HCT116 (cell line): ENCODE measurements at regions of chr19 and their contacts with region 1.

Region 1: DNA sequence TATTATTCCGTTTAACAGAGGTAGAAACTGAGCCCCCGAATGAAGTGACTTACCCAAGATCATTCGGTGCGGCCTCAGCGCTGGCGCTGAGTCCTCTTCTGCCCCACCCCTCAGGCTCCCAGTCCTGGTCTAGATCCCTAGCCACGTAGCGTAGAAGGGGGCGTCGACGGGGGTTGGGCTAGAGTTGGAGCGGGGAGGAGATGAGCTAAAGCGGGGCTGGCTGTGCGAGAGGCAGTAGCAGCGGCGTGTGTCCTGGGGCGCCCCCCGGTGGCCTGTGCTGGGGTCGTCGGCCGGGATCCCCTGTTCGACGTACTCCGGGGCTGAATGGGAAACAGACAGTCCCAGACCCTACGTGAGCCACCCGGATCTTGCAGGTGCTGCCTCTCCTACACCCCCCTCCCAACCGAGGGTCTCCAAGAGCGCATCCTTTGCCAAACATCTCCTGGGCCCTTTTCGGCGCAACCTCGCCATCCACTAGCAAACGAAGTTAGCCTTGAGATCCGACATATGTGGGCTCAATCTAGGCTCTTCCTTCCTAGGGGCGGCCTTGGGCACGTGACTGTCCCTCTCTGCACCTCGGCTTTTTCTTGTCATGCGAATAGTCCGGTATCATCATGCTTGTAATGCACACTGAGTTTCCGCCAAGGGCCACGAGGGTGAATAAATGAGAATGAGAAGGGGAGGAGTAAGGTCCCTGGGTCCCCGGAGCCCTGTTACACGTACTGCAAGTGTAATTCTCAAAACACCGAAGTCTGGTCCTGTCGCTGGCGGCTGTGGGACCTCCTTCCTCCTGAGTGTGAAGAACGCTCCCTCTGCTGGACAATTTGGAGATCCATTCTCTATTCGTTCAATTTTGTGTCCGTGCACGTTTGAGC is 47.7 kb downstream of the CYP4F22 start:
- DNase-seq: peak; percentile 93
- ATAC-seq: peak; percentile 91
- H3K4me3 ChIP-seq: peak overlapping the region; percentile 40 to 53
- H3K27ac ChIP-seq: peak overlapping the region; percentile 25
- H3K4me1 ChIP-seq: peaks cover 5 to 28% of the 10 kb centered on the region in 2 experiments; a peak in 3 of 4 replicates
- H3K27me3 ChIP-seq: no peaks in the 10 kb centered on the region
- CTCF ChIP-seq: peak; percentile 77 to 91 (median 90)
- POLR2A ChIP-seq: no peak
- RAD21 ChIP-seq: peak; percentile 95

Region 2: DNA sequence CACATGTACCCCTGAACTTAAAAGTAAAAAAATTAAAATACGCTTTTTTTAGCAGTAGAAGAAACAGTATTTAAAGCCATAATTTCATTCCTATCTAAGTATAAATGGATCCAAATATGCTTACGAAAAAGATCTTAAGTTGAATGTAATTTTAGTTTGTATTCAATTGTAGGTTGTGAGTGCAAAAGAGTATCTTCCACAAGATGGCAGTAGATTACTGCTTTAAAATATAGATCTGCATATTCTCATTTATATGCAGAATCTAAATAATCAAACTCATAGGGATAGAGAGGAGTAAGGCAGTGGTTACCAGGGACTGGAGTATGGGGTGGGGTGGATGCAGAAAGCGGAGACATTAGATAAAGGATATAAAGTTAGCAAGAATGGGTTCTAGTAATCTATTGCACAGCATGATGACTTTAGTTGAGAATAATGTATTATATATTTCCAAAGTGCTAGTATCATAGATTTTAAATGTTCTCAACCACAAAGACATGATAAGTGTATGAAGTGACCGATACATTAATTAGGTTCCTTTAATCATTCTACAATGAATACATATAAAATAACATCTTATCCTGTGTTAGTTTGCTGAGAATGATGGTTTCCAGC is 684.3 kb before region 1 on chr19:
- CTCF ChIA-PET with region 1: no interaction called
- POLR2A ChIA-PET with region 1: no interaction called
- RAD21 ChIA-PET with region 1: no interaction called
- intact Hi-C with region 1: loop called (anchors 2 kb)
- DNase-seq: peak; percentile 22
- ATAC-seq: peak; percentile 62
- H3K4me3 ChIP-seq: no peak overlapping the region
- H3K27ac ChIP-seq: no peak overlapping the region
- H3K4me1 ChIP-seq: no peaks in the 10 kb centered on the region
- H3K27me3 ChIP-seq: peaks cover 45% of the 10 kb centered on the region
- CTCF ChIP-seq: peak; percentile 46 to 80 (median 59); a peak in 5 of 6 replicates
- POLR2A ChIP-seq: no peak
- RAD21 ChIP-seq: peak; percentile 73

Region 3: DNA sequence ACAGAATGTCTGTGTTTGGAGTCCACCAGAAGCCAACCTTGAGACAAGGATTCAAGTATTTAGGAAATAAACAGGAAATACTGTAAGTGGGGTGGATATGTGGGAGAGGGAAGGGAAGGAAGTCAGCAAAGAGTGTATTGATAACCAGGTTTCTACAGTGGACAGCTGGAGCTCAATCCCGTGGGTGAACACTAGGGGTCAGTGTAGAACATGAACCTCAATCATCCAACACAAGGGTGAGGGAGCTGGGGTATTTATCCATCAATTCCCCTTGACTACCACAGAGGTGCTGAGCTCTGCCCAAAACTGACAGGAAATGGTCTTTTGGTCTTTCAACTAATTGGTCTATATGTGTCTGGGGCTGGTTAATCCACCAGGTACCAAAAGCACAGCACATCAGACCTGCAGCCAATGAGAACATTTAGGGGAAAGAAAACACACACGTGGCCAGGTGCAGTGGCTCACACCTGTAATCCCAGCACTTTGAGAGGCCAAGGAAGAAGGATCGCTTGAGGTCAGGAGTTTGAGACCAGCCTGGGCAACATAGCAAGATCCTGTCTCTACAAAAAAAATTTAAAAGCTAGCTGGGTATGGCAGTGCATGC is 454.4 kb before region 1 on chr19:
- CTCF ChIA-PET with region 1: interaction called, 15 read pairs
- POLR2A ChIA-PET with region 1: no interaction called
- RAD21 ChIA-PET with region 1: no interaction called
- intact Hi-C with region 1: no loop called
- DNase-seq: peak; percentile 38
- ATAC-seq: peak; percentile 82
- H3K4me3 ChIP-seq: no peak overlapping the region
- H3K27ac ChIP-seq: no peak overlapping the region
- H3K4me1 ChIP-seq: peaks cover 5% of the 10 kb centered on the region in 2 experiments; a peak in 3 of 4 replicates
- H3K27me3 ChIP-seq: no peaks in the 10 kb centered on the region
- CTCF ChIP-seq: peak; percentile 56 to 83 (median 80)
- POLR2A ChIP-seq: no peak
- RAD21 ChIP-seq: peak; percentile 68

Region 4: GRCh38 chr19:15177269-15178116 is 378.5 kb before region 1 on chr19:
- CTCF ChIA-PET with region 1: interaction called, 6 read pairs
- POLR2A ChIA-PET with region 1: no interaction called
- RAD21 ChIA-PET with region 1: no interaction called
- intact Hi-C with region 1: loop called (anchors 1 kb)
- DNase-seq: no peak
- ATAC-seq: peak; percentile 89
- H3K4me3 ChIP-seq: no peak overlapping the region
- H3K27ac ChIP-seq: no peak overlapping the region
- H3K4me1 ChIP-seq: peaks cover 0 to 3% of the 10 kb centered on the region in 2 experiments; a peak in 1 of 4 replicates
- H3K27me3 ChIP-seq: no peaks in the 10 kb centered on the region
- CTCF ChIP-seq: peak; percentile 64 to 78 (median 75)
- POLR2A ChIP-seq: no peak
- RAD21 ChIP-seq: peak; percentile 88

Region 5: DNA sequence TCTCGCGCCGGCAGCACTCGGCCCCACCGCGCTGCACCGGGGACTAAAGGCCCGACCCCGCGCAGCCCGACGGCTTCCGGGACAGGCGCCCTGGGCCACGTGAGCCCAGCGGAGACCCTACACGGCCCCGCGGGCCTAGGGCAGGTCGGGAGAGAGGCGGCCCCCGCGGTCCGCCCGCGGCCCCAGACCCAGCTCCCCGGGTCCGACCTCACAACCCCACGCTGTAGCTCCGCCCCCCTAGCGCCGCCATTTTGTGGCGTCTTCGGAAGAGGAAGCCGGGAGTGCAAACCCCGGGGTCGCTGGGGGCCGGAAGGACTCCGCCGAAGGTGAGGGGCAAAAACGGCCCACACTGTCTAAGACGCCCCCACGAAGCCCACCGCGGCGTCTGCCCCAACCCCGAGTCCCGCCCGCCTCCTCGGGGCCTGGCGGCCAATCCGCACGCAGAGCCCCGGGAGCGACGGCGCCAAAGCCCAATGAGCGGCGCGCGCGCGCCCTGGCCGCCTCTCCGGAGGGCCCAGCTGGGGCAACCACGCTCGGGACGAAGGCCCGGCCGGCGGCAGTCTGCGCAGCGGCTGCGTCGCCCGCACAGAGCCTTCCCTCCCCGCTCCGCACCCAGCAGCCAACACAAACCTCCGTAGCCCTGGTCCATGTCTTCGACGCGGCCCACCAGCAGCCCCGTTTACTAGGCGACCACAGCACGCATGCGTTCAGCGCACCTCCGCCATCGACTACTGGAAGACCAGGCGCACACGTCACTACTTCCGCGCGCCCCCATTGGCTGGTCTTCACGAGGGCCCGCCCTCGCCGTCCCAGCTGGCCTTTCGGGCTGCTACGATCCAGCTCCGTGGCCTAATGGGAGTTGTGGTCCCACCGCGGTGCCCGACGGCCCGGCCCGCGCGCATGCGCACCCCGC is 176.7 kb before region 1 on chr19 and contains the start of gene AKAP8:
- CTCF ChIA-PET with region 1: interaction called, 11 read pairs
- POLR2A ChIA-PET with region 1: interaction called, 9 read pairs
- RAD21 ChIA-PET with region 1: interaction called in 1 of 2 experiments, 3 read pairs
- intact Hi-C with region 1: loop called (anchors 2 kb)
- DNase-seq: peak; percentile 96
- ATAC-seq: peak; percentile 89
- H3K4me3 ChIP-seq: peak within 1 kb of the TSS; percentile 83 to 100
- H3K27ac ChIP-seq: peak within 1 kb of the TSS; percentile 96
- H3K4me1 ChIP-seq: peaks cover 13 to 33% of the 10 kb centered on the region in 2 experiments
- H3K27me3 ChIP-seq: no peaks in the 10 kb centered on the region
- CTCF ChIP-seq: no peak
- POLR2A ChIP-seq: peak; percentile 42
- RAD21 ChIP-seq: no peak
- total RNA-seq, gene AKAP8: 50.6 TPM

Region 6: GRCh38 chr19:15449620-15450527 is 106.1 kb before region 1 on chr19 and contains the start of gene WIZ:
- CTCF ChIA-PET with region 1: interaction called, 6 read pairs
- POLR2A ChIA-PET with region 1: interaction called, 4 read pairs
- RAD21 ChIA-PET with region 1: interaction called in 1 of 2 experiments, 3 read pairs
- intact Hi-C with region 1: loop called (anchors 10 kb)
- DNase-seq: no peak
- ATAC-seq: peak; percentile 53
- H3K4me3 ChIP-seq: peak within 1 kb of the TSS; percentile 59 to 62
- H3K27ac ChIP-seq: peak within 1 kb of the TSS; percentile 55; the same call in 1 of the 2 replicates
- H3K4me1 ChIP-seq: peaks cover 15 to 38% of the 10 kb centered on the region in 2 experiments; a peak in 3 of 4 replicates
- H3K27me3 ChIP-seq: no peaks in the 10 kb centered on the region
- CTCF ChIP-seq: no peak
- POLR2A ChIP-seq: no peak
- RAD21 ChIP-seq: no peak
- total RNA-seq, gene WIZ: 28.4 TPM

Region 7: DNA sequence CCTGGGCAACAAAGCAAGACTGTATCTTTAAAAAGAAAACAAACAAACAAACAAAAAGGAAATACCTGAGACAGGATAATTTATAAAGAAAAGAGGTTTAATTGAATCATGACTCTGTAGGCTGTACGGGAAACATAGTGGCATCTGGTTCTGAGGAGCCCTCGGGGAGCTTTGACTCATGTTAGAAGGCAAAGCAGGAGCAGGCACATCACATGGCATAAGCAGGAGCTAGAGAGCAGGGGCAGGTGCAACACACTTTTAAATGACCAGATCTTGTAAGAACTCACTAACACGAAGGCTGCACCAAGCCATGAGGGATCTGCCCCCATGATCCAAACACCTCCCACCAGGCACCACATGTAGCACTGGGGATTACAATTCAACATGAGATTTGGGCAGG is 158.6 kb after region 1 on chr19:
- CTCF ChIA-PET with region 1: no interaction called
- POLR2A ChIA-PET with region 1: no interaction called
- RAD21 ChIA-PET with region 1: no interaction called
- intact Hi-C with region 1: no loop called
- DNase-seq: no peak
- ATAC-seq: no peak
- H3K4me3 ChIP-seq: no peak overlapping the region
- H3K27ac ChIP-seq: no peak overlapping the region
- H3K4me1 ChIP-seq: no peaks in the 10 kb centered on the region
- H3K27me3 ChIP-seq: peaks cover 17% of the 10 kb centered on the region
- CTCF ChIP-seq: no peak
- POLR2A ChIP-seq: no peak
- RAD21 ChIP-seq: no peak